Activated CD8-positive, alpha-beta T cell treated with anti-CD3 and anti-CD28 coated beads for 36 hours (primary cell): ENCODE measurements at regions of chr3 and their contacts with region 1.

Region 1: GRCh38 chr3:172673210-172673679 is 37.6 kb downstream of the NCEH1 start:
- DNase-seq: peak; percentile 86
- ATAC-seq: peak; percentile 84
- H3K4me3 Mint-ChIP-seq: no peak overlapping the region
- H3K27ac Mint-ChIP-seq: no peak overlapping the region
- H3K4me1 Mint-ChIP-seq: peaks cover 2% of the 10 kb centered on the region
- H3K27me3 Mint-ChIP-seq: no peaks in the 10 kb centered on the region
- CTCF ChIP-seq: peak; percentile 70

Region 2: DNA sequence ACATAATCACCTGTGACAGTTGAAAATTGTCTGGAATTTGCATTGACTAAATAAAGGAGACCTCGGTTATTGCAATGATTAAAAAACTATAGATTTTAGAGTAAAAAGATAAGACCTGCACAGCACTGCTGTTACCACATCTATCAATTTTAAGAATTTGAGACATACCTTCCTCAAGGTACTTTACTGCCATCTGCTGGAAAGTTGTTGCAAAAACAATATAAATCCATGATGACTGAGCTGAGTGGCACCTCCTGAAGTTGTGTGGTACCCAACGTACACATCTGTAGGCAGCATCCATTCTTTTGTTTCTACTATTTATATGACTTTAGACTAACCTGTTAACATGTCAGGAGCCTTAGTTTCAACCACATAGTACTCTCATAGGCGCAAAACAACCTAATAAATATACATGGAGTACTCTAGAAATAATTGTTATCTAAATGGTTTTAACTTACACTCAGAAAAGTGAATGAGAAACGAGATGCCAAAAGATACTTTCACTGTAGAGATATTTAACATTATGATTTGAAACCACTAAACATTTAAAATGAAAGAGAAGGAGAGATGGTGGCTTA is 331.7 kb before region 1 on chr3:
- CTCF ChIA-PET with region 1: interaction called, 28 read pairs
- POLR2A ChIA-PET with region 1: no interaction called
- intact Hi-C with region 1: no loop called
- DNase-seq: peak; percentile 16
- ATAC-seq: peak; percentile 81
- H3K4me3 Mint-ChIP-seq: no peak overlapping the region
- H3K27ac Mint-ChIP-seq: no peak overlapping the region
- H3K4me1 Mint-ChIP-seq: no peaks in the 10 kb centered on the region
- H3K27me3 Mint-ChIP-seq: no peaks in the 10 kb centered on the region
- CTCF ChIP-seq: peak; percentile 83

Region 3: GRCh38 chr3:172687501-172687900 is 14.3 kb after region 1 on chr3:
- CTCF ChIA-PET with region 1: interaction called, 18 read pairs
- POLR2A ChIA-PET with region 1: interaction called, 5 read pairs
- intact Hi-C with region 1: no loop called
- DNase-seq: no peak
- ATAC-seq: no peak
- H3K4me3 Mint-ChIP-seq: no peak overlapping the region
- H3K27ac Mint-ChIP-seq: no peak overlapping the region
- H3K4me1 Mint-ChIP-seq: peaks cover 13% of the 10 kb centered on the region
- H3K27me3 Mint-ChIP-seq: no peaks in the 10 kb centered on the region
- CTCF ChIP-seq: no peak

Region 4: DNA sequence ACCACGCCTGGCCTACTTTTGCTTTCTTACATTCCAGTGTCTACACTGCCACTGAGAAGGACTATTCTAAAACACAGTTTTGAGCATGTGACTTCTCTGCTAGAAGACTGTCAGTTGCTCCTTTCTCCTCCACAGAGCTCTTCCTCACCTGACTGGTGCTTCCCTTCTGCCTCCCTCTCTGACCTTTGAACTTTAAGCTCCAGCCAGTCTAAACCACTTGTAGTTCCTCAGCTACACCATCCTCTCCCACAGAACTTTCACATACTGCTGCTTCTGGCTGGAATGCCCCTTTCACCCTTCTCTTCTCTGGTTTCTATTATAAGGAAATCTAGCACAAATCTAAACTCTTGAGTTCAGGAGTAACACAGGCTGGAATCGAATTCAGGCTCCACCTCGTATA is 28.5 kb after region 1 on chr3:
- CTCF ChIA-PET with region 1: interaction called, 13 read pairs
- POLR2A ChIA-PET with region 1: no interaction called
- intact Hi-C with region 1: no loop called
- DNase-seq: no peak
- ATAC-seq: no peak
- H3K4me3 Mint-ChIP-seq: no peak overlapping the region
- H3K27ac Mint-ChIP-seq: no peak overlapping the region
- H3K4me1 Mint-ChIP-seq: no peaks in the 10 kb centered on the region
- H3K27me3 Mint-ChIP-seq: no peaks in the 10 kb centered on the region
- CTCF ChIP-seq: no peak

Region 5: DNA sequence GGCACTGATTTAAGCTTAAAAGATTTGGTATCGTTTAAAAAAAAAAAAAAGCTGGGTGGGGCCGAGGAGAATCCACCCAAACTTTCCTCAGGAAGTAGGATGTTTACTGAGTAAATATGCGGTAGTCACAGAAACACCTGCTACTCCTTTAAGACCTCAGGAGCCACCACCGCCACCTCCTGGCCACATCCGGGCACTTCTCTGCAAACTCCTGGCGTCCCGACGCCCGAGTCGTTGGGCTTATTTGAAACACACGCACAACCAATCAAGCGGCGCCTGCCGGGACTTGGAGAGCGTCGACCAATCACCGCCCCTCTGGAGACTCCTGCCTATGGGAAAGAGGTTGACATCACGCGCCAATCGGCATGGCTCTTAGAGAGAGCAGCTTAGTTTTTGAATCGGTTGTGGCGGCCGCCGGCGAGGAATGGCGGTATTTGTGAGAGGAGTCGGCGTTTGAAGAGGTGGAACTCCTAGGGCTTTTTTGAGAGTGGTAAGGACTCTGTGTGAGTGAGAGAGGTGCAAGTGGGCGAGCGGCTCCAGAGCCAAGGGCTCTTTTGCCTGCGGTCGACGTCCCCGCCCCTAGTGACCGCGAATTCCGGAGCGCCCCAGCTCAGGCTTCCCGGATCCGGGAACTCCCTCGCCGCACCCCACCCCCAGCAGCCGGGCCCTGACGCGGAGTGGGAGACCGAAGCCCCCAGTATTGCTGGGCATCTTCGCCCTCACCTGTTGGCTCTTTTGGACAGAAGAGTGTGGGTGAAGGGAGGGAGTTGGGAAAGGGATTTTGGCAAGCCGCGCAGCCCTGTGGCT is 77.3 kb after region 1 on chr3 and contains the start of gene ECT2:
- CTCF ChIA-PET with region 1: interaction called, 13 read pairs
- POLR2A ChIA-PET with region 1: interaction called, 4 read pairs
- intact Hi-C with region 1: no loop called
- DNase-seq: peak; percentile 100
- ATAC-seq: peak; percentile 99
- H3K4me3 Mint-ChIP-seq: peak within 1 kb of the TSS; percentile 89
- H3K27ac Mint-ChIP-seq: peak within 1 kb of the TSS; percentile 98
- H3K4me1 Mint-ChIP-seq: peaks cover 13% of the 10 kb centered on the region
- H3K27me3 Mint-ChIP-seq: no peaks in the 10 kb centered on the region
- CTCF ChIP-seq: peak; percentile 36
- total RNA-seq, gene ECT2: 27.1 to 29.8 TPM